Activated CD8-positive, alpha-beta memory T cell treated with anti-CD3 and anti-CD28 coated beads, Interleukin-2, amount 10 ng/mL, durations not matched to agents 7 days and 5 days (primary cell): ENCODE measurements at regions of chr5 and their contacts with region 1.

Region 1: DNA sequence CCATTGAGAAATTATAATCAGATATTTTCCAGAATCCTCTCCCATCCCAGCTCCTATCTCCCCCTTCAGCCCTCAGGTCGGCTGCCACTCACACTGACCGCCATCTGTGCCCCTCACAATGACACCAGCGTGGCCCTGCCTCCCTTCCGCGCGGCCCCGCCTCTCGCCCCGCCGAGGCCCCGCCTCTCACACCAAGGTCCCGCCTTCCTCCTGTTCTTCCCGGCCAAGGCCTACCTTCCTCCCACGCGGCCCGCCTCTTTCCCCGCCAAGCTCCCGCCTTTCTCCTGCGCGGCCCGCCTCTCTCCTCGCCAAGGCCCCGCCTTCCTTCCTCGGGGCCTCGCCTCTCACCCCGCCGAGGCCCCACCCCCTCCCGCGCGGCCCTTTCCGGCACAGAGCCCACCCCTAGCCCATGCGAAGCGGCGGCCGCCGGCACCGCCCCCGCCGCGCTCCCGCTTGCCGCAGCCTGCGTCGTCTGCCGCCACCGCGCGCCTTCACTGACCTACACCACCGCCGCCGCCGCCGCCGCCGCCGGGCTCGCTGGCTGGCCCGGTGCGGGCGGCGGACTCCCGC is at the start of gene DNAJC21:
- DNase-seq: peak; percentile 98
- ATAC-seq: peak; percentile 91
- H3K4me3 Mint-ChIP-seq: peak within 1 kb of the TSS; percentile 93
- H3K27ac Mint-ChIP-seq: peak within 1 kb of the TSS; percentile 96
- H3K4me1 Mint-ChIP-seq: peaks cover 40% of the 10 kb centered on the region
- H3K27me3 Mint-ChIP-seq: no peaks in the 10 kb centered on the region
- total RNA-seq, gene DNAJC21: 50.6 to 54.6 TPM

Region 2: GRCh38 chr5:34915139-34915855 is 13.9 kb before region 1 on chr5 and contains the starts of genes BRIX1 and RAD1:
- CTCF ChIA-PET with region 1: interaction called, 29 read pairs
- DNase-seq: peak; percentile 97
- ATAC-seq: peak; percentile 94
- H3K4me3 Mint-ChIP-seq: no peak within 1 kb of the TSS
- H3K27ac Mint-ChIP-seq: peak within 1 kb of the TSS; percentile 60
- H3K4me1 Mint-ChIP-seq: peaks cover 39% of the 10 kb centered on the region
- H3K27me3 Mint-ChIP-seq: no peaks in the 10 kb centered on the region
- total RNA-seq, gene BRIX1: 42.2 to 58.0 TPM
- total RNA-seq, gene RAD1: 33.2 to 37.7 TPM